ENCODE measurements at regions of chr10 and their contacts with region 1.

Region 1: DNA sequence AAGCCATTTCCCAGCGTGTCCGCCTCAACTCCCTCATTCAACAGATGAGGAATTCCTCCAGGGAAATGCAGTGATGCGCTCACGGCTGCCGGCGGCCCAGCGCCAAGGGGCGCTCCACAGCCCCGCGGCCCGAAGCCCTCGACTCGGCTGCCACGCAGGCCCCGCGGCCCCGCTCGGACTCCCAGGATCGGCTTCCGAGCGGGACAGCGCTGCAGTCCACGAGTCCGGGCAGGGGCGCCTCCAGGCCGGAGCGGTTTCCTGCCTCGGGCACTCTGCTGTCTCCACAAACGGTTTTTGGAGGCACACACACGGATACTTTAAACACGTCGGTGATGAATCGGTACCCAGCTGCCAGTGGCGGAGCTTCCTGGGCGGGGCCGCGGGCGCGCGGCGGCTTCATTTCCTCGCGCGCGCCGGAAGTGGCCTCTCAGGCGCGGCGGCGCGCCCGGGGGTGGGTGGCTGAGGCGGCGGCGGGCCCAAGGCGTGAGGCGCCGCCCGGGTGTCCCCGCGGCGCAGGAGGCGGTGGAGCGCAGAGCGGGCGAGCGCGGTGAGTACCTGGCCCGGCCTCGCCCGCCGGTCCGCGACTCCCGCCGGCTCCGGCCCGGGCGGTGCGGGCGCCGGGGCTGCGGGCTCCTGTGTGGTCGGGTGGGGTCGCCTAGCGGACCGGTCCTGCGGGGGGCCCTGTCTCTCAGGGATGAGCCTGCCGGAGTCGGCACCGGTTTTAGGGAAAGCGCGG is at the start of gene CSGALNACT2:
- DNase-seq: peak; percentile 88 to 91 (median 90)
- H3K4me3 ChIP-seq: peak within 1 kb of the TSS; percentile 67 to 92
- H3K4me3 Mint-ChIP-seq: peak within 1 kb of the TSS; percentile 91 to 100 (median 98)
- H3K27ac ChIP-seq: peak within 1 kb of the TSS; percentile 89
- H3K27ac Mint-ChIP-seq: peak within 1 kb of the TSS; percentile 97 to 100 (median 99)
- H3K4me1 ChIP-seq: peaks cover 49% of the 10 kb centered on the region
- H3K4me1 Mint-ChIP-seq: peaks cover 33 to 56% (median 43%) of the 10 kb centered on the region in 4 donors
- H3K27me3 ChIP-seq: no peaks in the 10 kb centered on the region
- H3K27me3 Mint-ChIP-seq: no peaks in the 10 kb centered on the region
- total RNA-seq, gene CSGALNACT2: 45.3 to 48.2 TPM

Region 2: DNA sequence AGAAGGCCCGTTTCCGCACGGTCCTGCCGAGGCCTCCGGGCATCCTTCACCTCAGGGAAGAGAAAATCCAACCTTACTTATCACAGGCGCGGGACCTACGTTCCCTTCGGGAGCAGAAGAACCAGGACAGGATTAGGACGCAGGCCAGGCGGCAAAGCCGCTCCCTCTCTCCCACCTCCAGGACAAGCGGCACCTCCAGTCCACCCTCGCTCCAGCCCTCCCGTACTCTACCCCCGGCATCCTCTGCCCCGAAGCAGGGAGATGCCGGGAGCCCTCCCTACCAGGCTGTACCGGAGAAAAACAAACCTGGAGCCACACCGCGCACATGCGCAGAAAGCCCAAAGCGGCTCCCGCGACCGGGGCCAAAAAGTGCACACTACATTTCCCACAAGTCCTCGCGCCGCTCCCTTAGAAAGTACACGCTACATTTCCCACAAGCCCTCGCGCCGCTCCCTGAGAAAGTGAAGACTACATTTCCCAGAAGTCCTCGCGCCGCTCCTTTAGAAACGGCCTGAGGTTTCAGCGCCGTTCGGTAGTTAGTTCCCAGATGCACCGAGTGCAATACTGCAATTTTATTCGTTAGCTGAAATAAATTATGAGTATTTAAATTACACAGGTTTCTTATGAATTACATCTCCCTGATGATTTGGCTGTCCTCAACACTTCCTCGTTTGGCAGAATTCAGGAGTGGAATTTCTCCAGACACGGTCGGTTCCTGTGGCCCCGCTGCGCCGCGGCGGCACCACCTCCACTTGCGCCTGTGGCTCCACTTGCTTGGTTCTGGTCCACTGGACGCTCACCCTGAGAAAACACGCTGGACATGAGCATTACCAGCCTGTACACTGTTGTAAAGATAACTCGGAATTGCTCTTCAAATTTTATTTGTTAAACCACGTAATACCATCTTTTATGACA is 585.4 kb before region 1 on chr10:
- CTCF ChIA-PET with region 1: no interaction called
- POLR2A ChIA-PET with region 1: interaction called, 3 read pairs
- intact Hi-C with region 1: loop called (anchors 1 kb)
- DNase-seq: peak; percentile 90 to 94 (median 92)
- H3K4me3 ChIP-seq: peak overlapping the region; percentile 96 to 100
- H3K4me3 Mint-ChIP-seq: peak overlapping the region; percentile 97 to 100 (median 98)
- H3K27ac ChIP-seq: peak overlapping the region; percentile 83
- H3K27ac Mint-ChIP-seq: peak overlapping the region; percentile 88 to 98 (median 97)
- H3K4me1 ChIP-seq: peaks cover 34% of the 10 kb centered on the region
- H3K4me1 Mint-ChIP-seq: peaks cover 29 to 45% (median 38%) of the 10 kb centered on the region in 4 donors
- H3K27me3 ChIP-seq: no peaks in the 10 kb centered on the region
- H3K27me3 Mint-ChIP-seq: no peaks in the 10 kb centered on the region

Region 3: GRCh38 chr10:43055991-43056567 is 82.1 kb before region 1 on chr10:
- CTCF ChIA-PET with region 1: no interaction called
- POLR2A ChIA-PET with region 1: no interaction called
- intact Hi-C with region 1: no loop called
- DNase-seq: no peak
- H3K4me3 ChIP-seq: no peak overlapping the region
- H3K4me3 Mint-ChIP-seq: no peak overlapping the region
- H3K27ac ChIP-seq: no peak overlapping the region
- H3K27ac Mint-ChIP-seq: no peak overlapping the region
- H3K4me1 ChIP-seq: no peaks in the 10 kb centered on the region
- H3K4me1 Mint-ChIP-seq: no peaks in the 10 kb centered on the region
- H3K27me3 ChIP-seq: no peaks in the 10 kb centered on the region
- H3K27me3 Mint-ChIP-seq: peaks cover 8 to 19% of the 10 kb centered on the region in 2 donors

Region 4: GRCh38 chr10:43120929-43121314 is 17.3 kb before region 1 on chr10:
- CTCF ChIA-PET with region 1: interaction called, 3 read pairs
- POLR2A ChIA-PET with region 1: interaction called, 39 read pairs
- intact Hi-C with region 1: no loop called
- DNase-seq: peak; percentile 26 to 69 (median 52)
- H3K4me3 ChIP-seq: no peak overlapping the region
- H3K4me3 Mint-ChIP-seq: peak overlapping the region in 7 of 8 donors; percentile 9 to 67 (median 45)
- H3K27ac ChIP-seq: peak overlapping the region; percentile 16
- H3K27ac Mint-ChIP-seq: peak overlapping the region; percentile 75 to 95 (median 85)
- H3K4me1 ChIP-seq: peaks cover 21% of the 10 kb centered on the region
- H3K4me1 Mint-ChIP-seq: peaks cover 12 to 27% (median 19%) of the 10 kb centered on the region in 4 donors
- H3K27me3 ChIP-seq: no peaks in the 10 kb centered on the region
- H3K27me3 Mint-ChIP-seq: peaks cover 0 to 1% of the 10 kb centered on the region in 2 donors

Region 5: GRCh38 chr10:43204943-43205671 is 66.9 kb after region 1 on chr10:
- CTCF ChIA-PET with region 1: interaction called, 13 read pairs
- POLR2A ChIA-PET with region 1: interaction called, 6 read pairs
- intact Hi-C with region 1: loop called (anchors 1 kb)
- DNase-seq: peak in 4 of 5 donors; percentile 29 to 52 (median 47)
- H3K4me3 ChIP-seq: no peak overlapping the region
- H3K4me3 Mint-ChIP-seq: no peak overlapping the region
- H3K27ac ChIP-seq: no peak overlapping the region
- H3K27ac Mint-ChIP-seq: peak overlapping the region in 2 of 7 donors; percentile 53 to 66
- H3K4me1 ChIP-seq: peaks cover 8% of the 10 kb centered on the region
- H3K4me1 Mint-ChIP-seq: peaks cover 0 to 10% (median 2%) of the 10 kb centered on the region in 4 donors
- H3K27me3 ChIP-seq: no peaks in the 10 kb centered on the region
- H3K27me3 Mint-ChIP-seq: no peaks in the 10 kb centered on the region

Region 6: GRCh38 chr10:43396928-43397624 is 258.9 kb after region 1 on chr10:
- CTCF ChIA-PET with region 1: no interaction called
- POLR2A ChIA-PET with region 1: interaction called, 13 read pairs
- intact Hi-C with region 1: no loop called
- DNase-seq: peak; percentile 67 to 82 (median 75)
- H3K4me3 ChIP-seq: peak overlapping the region; percentile 10 to 67
- H3K4me3 Mint-ChIP-seq: peak overlapping the region; percentile 79 to 100 (median 96)
- H3K27ac ChIP-seq: peak overlapping the region; percentile 100
- H3K27ac Mint-ChIP-seq: peak overlapping the region; percentile 93 to 99 (median 98)
- H3K4me1 ChIP-seq: peaks cover 81% of the 10 kb centered on the region
- H3K4me1 Mint-ChIP-seq: peaks cover 62 to 95% (median 73%) of the 10 kb centered on the region in 4 donors
- H3K27me3 ChIP-seq: no peaks in the 10 kb centered on the region
- H3K27me3 Mint-ChIP-seq: no peaks in the 10 kb centered on the region

Region 7: GRCh38 chr10:43574001-43574892 is 436.1 kb after region 1 on chr10 and contains the start of gene ZNF239:
- CTCF ChIA-PET with region 1: no interaction called
- POLR2A ChIA-PET with region 1: interaction called, 4 read pairs
- intact Hi-C with region 1: loop called (anchors 5 kb)
- DNase-seq: peak; percentile 80 to 83 (median 83)
- H3K4me3 ChIP-seq: peak within 1 kb of the TSS; percentile 15 to 54
- H3K4me3 Mint-ChIP-seq: peak within 1 kb of the TSS; percentile 80 to 90 (median 88)
- H3K27ac ChIP-seq: peak within 1 kb of the TSS; percentile 58
- H3K27ac Mint-ChIP-seq: peak within 1 kb of the TSS; percentile 88 to 98 (median 95)
- H3K4me1 ChIP-seq: peaks cover 48% of the 10 kb centered on the region
- H3K4me1 Mint-ChIP-seq: peaks cover 38 to 65% (median 49%) of the 10 kb centered on the region in 4 donors
- H3K27me3 ChIP-seq: no peaks in the 10 kb centered on the region
- H3K27me3 Mint-ChIP-seq: no peaks in the 10 kb centered on the region
- total RNA-seq, gene ZNF239: 5.8 to 6.2 TPM

Measured in CD4-positive, alpha-beta memory T cell (primary cell).